HCT116 (cell line): ENCODE measurements at regions of chr9 and their contacts with region 1.

Region 1: DNA sequence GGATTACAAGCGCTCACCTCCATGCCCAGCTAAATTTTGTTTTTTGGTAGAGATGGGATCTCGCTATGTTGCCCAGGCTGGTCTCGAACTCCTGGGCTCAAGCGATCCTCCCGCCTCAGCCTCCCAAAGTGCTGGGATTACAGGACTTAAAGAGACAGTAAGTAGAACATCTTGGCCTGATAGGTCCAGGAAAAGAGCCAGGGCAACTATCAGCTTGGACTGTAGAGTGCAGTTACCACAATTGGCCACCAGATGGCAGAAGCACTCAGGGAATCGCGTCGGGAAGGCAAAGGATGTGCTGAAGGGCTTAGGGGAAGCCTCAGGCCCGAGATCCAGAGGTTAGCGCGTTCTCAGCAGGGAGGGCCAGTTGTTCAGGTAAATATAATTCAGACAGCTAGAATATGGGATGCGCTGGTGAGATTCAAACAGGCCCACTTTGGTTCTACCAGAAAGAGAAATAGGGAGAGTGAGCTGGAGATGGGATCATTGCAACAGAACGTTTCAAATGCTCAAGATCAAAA is 21.5 kb downstream of the C9orf57 start:
- DNase-seq: peak; percentile 83
- ATAC-seq: peak; percentile 96
- H3K4me3 ChIP-seq: no peak overlapping the region
- H3K27ac ChIP-seq: no peak overlapping the region
- H3K4me1 ChIP-seq: peaks cover 0 to 12% of the 10 kb centered on the region in 2 experiments; a peak in 2 of 4 replicates
- H3K27me3 ChIP-seq: no peaks in the 10 kb centered on the region
- CTCF ChIP-seq: peak; percentile 87 to 94 (median 88)
- POLR2A ChIP-seq: no peak
- RAD21 ChIP-seq: peak; percentile 99

Region 2: GRCh38 chr9:72149231-72149975 is 110.5 kb after region 1 on chr9 and contains the start of gene GDA:
- CTCF ChIA-PET with region 1: interaction called, 6 read pairs
- POLR2A ChIA-PET with region 1: interaction called, 3 read pairs
- RAD21 ChIA-PET with region 1: no interaction called
- intact Hi-C with region 1: loop called (anchors 5 kb)
- DNase-seq: peak; percentile 68
- ATAC-seq: peak; percentile 80
- H3K4me3 ChIP-seq: peak within 1 kb of the TSS; percentile 79 to 84
- H3K27ac ChIP-seq: peak within 1 kb of the TSS; percentile 84
- H3K4me1 ChIP-seq: peaks cover 45 to 75% of the 10 kb centered on the region in 2 experiments
- H3K27me3 ChIP-seq: no peaks in the 10 kb centered on the region
- CTCF ChIP-seq: no peak
- POLR2A ChIP-seq: no peak
- RAD21 ChIP-seq: 0 out of 2 replicates have a peak, but pooled peaks have one; percentile 4
- total RNA-seq, gene GDA: 49.4 TPM

Region 3: DNA sequence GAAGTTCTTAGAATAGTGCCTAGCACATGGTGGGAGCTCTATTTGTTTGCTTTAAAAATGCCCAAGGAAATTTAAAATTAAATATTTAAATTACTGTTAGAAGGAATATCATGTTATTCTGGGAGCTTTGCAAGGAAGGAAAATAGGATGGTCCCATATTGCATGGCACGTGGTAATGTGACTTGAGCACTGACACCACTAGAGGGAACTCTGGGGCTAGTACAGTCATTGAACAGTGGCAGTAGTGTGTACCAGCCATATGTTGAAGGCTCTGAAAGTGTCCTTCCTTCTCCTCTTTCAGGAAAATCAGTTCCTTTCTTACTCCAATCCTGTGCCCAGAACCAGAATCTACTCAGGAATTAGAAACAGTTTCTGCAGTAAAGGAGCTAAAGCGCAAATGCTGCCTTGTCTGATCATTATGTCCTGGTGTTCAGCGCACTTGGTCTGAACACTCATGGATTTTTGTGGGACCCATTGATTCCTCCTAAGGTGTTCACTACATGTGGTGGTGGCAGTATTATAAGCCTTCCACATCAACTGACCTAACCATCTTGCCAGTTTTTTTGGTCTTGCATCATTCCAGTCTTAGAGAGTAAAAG is 164.4 kb after region 1 on chr9:
- CTCF ChIA-PET with region 1: interaction called, 4 read pairs
- POLR2A ChIA-PET with region 1: no interaction called
- RAD21 ChIA-PET with region 1: interaction called in 1 of 2 experiments, 4 read pairs
- intact Hi-C with region 1: loop called (anchors 1 kb)
- DNase-seq: peak; percentile 28
- ATAC-seq: peak; percentile 98
- H3K4me3 ChIP-seq: no peak overlapping the region
- H3K27ac ChIP-seq: no peak overlapping the region
- H3K4me1 ChIP-seq: no peaks in the 10 kb centered on the region
- H3K27me3 ChIP-seq: no peaks in the 10 kb centered on the region
- CTCF ChIP-seq: peak; percentile 42 to 69 (median 63); a peak in 5 of 6 replicates
- POLR2A ChIP-seq: no peak
- RAD21 ChIP-seq: peak; percentile 56

Region 4: GRCh38 chr9:72271613-72272478 is 232.9 kb after region 1 on chr9:
- CTCF ChIA-PET with region 1: interaction called, 84 read pairs
- POLR2A ChIA-PET with region 1: interaction called, 6 read pairs
- RAD21 ChIA-PET with region 1: interaction called, 13 to 18 read pairs
- intact Hi-C with region 1: loop called (anchors 1 kb)
- DNase-seq: peak; percentile 47
- ATAC-seq: peak; percentile 90
- H3K4me3 ChIP-seq: no peak overlapping the region
- H3K27ac ChIP-seq: no peak overlapping the region
- H3K4me1 ChIP-seq: no peaks in the 10 kb centered on the region
- H3K27me3 ChIP-seq: no peaks in the 10 kb centered on the region
- CTCF ChIP-seq: peak; percentile 75 to 90 (median 85)
- POLR2A ChIP-seq: no peak
- RAD21 ChIP-seq: peak; percentile 91

Region 5: GRCh38 chr9:72280913-72281500 is 242.1 kb after region 1 on chr9:
- CTCF ChIA-PET with region 1: interaction called, 21 read pairs
- POLR2A ChIA-PET with region 1: interaction called, 4 read pairs
- RAD21 ChIA-PET with region 1: no interaction called
- intact Hi-C with region 1: no loop called
- DNase-seq: peak; percentile 60
- ATAC-seq: peak; percentile 98
- H3K4me3 ChIP-seq: no peak overlapping the region
- H3K27ac ChIP-seq: no peak overlapping the region
- H3K4me1 ChIP-seq: no peaks in the 10 kb centered on the region
- H3K27me3 ChIP-seq: no peaks in the 10 kb centered on the region
- CTCF ChIP-seq: peak; percentile 91 to 96 (median 91)
- POLR2A ChIP-seq: no peak
- RAD21 ChIP-seq: peak; percentile 96

Region 6: DNA sequence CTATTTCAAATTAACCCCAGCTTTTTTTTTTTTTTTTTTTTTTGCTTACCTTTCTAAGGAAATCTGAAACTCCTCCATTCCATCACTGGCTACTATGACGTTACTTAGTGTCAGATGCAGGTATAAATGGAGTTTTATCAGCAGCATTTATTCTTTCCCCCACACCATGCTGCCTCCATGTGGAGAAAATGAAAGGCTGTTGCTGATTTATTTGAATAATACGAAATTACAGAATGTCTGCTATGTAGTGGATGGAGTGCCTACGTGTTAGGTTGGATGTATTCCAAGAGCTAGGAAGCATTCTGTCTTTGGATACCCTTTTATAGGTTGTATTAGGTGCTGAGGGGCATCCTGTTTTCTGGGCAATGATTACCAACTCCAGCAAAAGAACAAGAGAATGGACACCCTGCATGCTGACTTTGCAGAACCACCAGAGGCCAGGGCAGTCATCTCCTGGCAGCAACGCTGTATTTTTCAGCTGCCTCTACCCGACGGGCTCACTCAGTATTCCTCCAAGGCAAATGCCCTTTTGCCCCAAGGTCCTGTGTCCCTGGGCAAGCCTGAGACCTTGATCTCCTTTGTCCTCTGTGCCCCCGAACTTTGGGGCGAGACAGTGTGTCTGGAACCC is 714.4 kb after region 1 on chr9:
- CTCF ChIA-PET with region 1: interaction called, 3 read pairs
- POLR2A ChIA-PET with region 1: no interaction called
- RAD21 ChIA-PET with region 1: interaction called in 1 of 2 experiments, 3 read pairs
- intact Hi-C with region 1: loop called (anchors 2 kb)
- DNase-seq: no peak
- ATAC-seq: peak; percentile 52
- H3K4me3 ChIP-seq: no peak overlapping the region
- H3K27ac ChIP-seq: no peak overlapping the region
- H3K4me1 ChIP-seq: peaks cover 0 to 5% of the 10 kb centered on the region in 2 experiments; a peak in 1 of 4 replicates
- H3K27me3 ChIP-seq: no peaks in the 10 kb centered on the region
- CTCF ChIP-seq: peak in 2 of 3 experiments; percentile 41 to 46; a peak in 3 of 6 replicates
- POLR2A ChIP-seq: no peak
- RAD21 ChIP-seq: peak; percentile 75